ENCODE measurements at regions of chr15 and their contacts with region 1.

Region 1: DNA sequence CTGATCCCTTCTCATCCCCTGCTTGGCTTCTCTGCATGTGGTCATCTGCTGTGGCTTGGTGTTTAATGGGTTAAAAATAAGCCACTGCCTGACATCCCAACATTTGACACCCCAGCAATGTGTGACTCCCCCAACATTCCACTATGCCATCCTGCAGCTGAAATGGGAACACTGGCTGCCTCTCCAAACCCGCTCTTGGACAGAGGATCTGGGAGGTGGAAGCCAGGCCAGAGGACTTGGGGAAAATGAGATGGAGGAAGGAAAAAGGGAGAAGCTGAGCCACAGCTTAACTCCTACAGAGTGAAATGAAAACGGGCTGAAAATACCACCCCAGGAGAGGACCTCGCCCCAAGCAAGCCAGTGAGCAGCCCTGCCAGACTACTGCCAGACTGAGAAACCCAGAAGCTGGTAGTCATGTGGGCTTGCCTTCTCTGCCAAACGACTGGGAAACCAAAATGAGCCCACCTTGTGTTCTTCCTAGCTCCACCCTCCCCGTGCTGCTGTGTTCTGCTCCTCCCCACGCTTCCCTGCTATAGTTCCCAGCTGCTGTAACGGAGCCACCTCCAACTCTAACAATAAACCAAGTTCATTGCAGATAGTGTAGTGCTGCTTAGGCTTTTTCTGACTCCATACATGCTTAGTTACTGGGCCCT is 13.7 kb downstream of the MAP1A start:
- DNase-seq: no peak
- H3K4me3 ChIP-seq: no peak overlapping the region
- H3K27ac ChIP-seq: no peak overlapping the region
- H3K27me3 ChIP-seq: no peaks in the 10 kb centered on the region
- CTCF ChIP-seq: no peak

Region 2: GRCh38 chr15:43541785-43542184 is 10.6 kb after region 1 on chr15:
- CTCF ChIA-PET with region 1: no interaction called
- POLR2A ChIA-PET with region 1: interaction called, 10 read pairs
- DNase-seq: no peak
- H3K4me3 ChIP-seq: no peak overlapping the region
- H3K27ac ChIP-seq: no peak overlapping the region
- H3K27me3 ChIP-seq: no peaks in the 10 kb centered on the region
- CTCF ChIP-seq: no peak

Region 3: GRCh38 chr15:43762824-43763223 is 231.7 kb after region 1 on chr15:
- CTCF ChIA-PET with region 1: no interaction called
- POLR2A ChIA-PET with region 1: no interaction called
- DNase-seq: peak; percentile 62
- H3K4me3 ChIP-seq: no peak overlapping the region
- H3K27ac ChIP-seq: peak overlapping the region; percentile 75
- H3K27me3 ChIP-seq: no peaks in the 10 kb centered on the region
- CTCF ChIP-seq: no peak